A549 (cell line): ENCODE measurements at regions of chr2 and their contacts with region 1.

Region 1: DNA sequence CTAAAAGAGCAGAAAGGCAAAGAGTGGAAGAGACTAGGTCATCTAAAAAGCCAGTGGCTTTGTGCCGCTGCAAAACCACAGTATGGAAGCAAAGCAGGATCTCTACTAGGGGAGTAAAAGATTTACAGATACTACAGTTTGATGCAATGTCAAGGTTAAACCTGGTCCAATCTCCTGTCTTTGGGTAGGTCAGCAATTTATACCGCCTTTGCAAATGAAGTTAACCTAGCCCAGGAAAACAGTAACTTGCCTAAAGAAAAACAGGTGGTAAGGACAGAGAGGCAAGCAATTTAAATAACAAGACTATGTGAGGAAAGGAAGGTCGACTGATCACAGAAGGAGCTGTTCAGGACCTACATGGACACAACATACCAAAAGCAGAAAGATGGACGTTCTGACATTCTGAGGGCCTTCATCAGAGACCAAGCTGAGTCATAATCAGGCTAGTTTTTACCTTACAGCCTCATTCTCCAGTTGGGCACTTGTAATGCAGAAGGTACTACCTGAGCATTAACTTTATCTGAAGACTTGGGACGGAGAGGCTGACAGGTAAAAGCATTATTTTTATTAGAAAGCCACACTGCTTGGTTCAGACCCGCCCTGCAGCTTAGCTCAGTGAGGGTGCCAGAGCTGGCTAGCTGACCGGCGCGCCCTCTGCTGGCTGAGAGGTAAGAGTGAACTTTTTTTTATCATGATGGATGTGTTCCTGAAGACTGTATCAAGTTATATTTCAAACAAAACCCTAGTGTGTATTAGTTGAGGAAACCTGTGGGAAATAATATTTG is 15.9 kb downstream of the CDKL4 start:
- DNase-seq: peak; percentile 76 to 79
- ATAC-seq: peak; percentile 84 to 92
- H3K4me3 ChIP-seq: no peak overlapping the region
- H3K27ac ChIP-seq: peak overlapping the region; percentile 19 to 26; a peak in 2 of 6 replicates
- H3K4me1 ChIP-seq: no peaks in the 10 kb centered on the region
- CTCF ChIP-seq: peak; percentile 97
- EP300 ChIP-seq: no peak
- POLR2A ChIP-seq: no peak
- RAD21 ChIP-seq: peak; percentile 85 to 88

Region 2: DNA sequence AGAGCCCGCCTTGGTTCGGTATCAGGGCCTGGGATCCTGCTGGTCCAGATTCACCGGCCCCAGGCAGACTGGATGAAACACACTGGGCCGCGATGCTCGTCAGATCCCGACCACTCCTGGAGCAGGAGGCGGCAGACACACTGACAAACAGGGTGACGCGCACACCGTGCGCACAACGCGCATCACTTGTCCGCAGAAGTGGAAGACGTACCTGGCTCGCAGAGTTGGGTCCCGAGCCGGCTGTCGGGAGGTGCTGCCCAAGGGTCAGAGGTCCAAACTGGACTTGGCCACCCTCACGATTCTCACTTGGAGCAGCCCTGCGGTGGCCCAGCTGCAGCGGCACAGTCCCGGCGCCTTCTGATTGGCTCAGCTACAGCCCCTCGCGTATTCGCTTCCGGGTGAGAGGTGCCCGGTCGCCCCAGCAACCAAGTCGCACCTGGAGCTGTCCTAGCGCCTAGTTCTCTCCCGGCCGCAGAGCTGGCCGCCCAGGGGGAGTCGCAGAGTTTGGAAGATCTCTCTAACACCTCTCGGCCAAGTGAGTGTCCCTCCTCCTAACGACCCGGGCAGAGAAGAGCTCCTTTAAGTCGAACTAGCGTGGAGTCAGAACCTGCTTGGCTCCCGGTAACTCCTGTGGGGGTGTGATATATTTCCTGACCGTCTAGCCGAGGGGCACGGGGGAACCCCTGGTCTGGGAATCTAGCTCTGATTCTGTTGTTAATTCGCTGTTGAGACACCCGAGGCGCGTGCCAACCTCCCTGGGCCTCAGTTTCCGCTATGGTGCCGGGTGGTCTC is 352.0 kb before region 1 on chr2 and contains the starts of genes DHX57 and MORN2:
- CTCF ChIA-PET with region 1: interaction called, 11 read pairs
- POLR2A ChIA-PET with region 1: no interaction called
- DNase-seq: peak; percentile 88 to 98
- ATAC-seq: peak; percentile 99 to 100
- H3K4me3 ChIP-seq: peak within 1 kb of the TSS; percentile 74
- H3K27ac ChIP-seq: peak within 1 kb of the TSS; percentile 80 to 90
- H3K4me1 ChIP-seq: peaks cover 9% of the 10 kb centered on the region
- CTCF ChIP-seq: no peak
- EP300 ChIP-seq: no peak
- POLR2A ChIP-seq: peak; percentile 79
- RAD21 ChIP-seq: no peak; a peak in 1 of 5 replicates
- polyA plus RNA-seq, gene DHX57: 31.8 and 36.8 TPM in 2 replicates
- polyA plus RNA-seq, gene MORN2: 32.5 and 54.7 TPM in 2 replicates

Region 3: DNA sequence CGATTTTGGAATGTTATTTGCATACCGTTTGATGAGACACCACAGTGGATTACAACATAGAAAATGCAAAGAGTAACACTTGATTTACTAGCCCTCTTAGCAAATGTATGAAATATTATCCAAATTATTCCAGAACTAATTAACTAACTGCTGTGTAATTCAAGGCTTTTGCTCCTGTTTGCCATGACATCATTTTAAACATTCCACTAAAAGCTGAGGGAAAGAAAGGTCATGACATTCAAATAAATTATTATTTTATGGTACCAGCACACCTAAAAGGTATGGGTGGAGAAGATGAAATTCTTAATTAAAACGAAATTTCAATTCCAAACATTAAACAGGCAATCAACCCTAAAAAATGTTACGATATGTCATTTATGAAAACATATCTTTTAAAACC is 199.0 kb before region 1 on chr2:
- CTCF ChIA-PET with region 1: interaction called, 15 read pairs
- POLR2A ChIA-PET with region 1: no interaction called
- DNase-seq: no peak
- ATAC-seq: no peak
- H3K4me3 ChIP-seq: no peak overlapping the region
- H3K27ac ChIP-seq: no peak overlapping the region
- H3K4me1 ChIP-seq: peaks cover 8% of the 10 kb centered on the region; the same call in 2 of the 3 replicates
- CTCF ChIP-seq: no peak
- EP300 ChIP-seq: no peak
- POLR2A ChIP-seq: no peak
- RAD21 ChIP-seq: no peak

Region 4: GRCh38 chr2:39065616-39066015 is 162.2 kb before region 1 on chr2:
- CTCF ChIA-PET with region 1: interaction called, 139 read pairs
- POLR2A ChIA-PET with region 1: no interaction called
- DNase-seq: no peak
- ATAC-seq: no peak
- H3K4me3 ChIP-seq: no peak overlapping the region
- H3K27ac ChIP-seq: no peak overlapping the region
- H3K4me1 ChIP-seq: 0 out of 3 replicates have a peak, but pooled peaks cover 7% of the 10 kb centered on the region
- CTCF ChIP-seq: no peak
- EP300 ChIP-seq: no peak
- POLR2A ChIP-seq: no peak
- RAD21 ChIP-seq: no peak

Region 5: GRCh38 chr2:39124000-39124745 is 103.6 kb before region 1 on chr2:
- CTCF ChIA-PET with region 1: interaction called, 53 read pairs
- POLR2A ChIA-PET with region 1: interaction called, 6 read pairs
- DNase-seq: peak; percentile 89 to 99
- ATAC-seq: peak; percentile 73 to 88
- H3K4me3 ChIP-seq: peak overlapping the region; percentile 61
- H3K27ac ChIP-seq: peak overlapping the region; percentile 84 to 89
- H3K4me1 ChIP-seq: peaks cover 14% of the 10 kb centered on the region; the same call in 2 of the 3 replicates
- CTCF ChIP-seq: peak; percentile 65
- EP300 ChIP-seq: no peak
- POLR2A ChIP-seq: peak; percentile 77
- RAD21 ChIP-seq: peak in 1 of 2 experiments; percentile 68; a peak in 3 of 5 replicates

Region 6: DNA sequence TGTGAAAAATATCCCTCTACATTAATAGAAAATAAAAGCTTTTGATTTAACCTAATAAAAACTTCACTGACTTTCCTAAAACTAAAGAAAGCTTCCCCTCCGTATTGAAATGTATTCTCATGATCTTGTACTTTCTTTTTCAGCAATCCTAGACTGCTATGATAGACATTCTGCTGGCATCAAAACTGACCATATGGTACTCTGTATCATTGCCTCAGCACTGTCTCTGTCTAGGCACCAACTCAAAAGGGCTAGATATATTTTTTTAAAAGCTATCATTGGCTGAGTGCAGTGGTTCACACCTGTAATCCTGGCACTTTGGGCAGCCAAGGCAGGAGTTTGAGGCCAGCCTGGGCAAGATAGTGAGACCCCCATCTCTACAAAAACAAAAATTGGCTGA is 17.0 kb before region 1 on chr2:
- CTCF ChIA-PET with region 1: interaction called, 33 read pairs
- POLR2A ChIA-PET with region 1: no interaction called
- DNase-seq: no peak
- ATAC-seq: no peak
- H3K4me3 ChIP-seq: no peak overlapping the region
- H3K27ac ChIP-seq: no peak overlapping the region
- H3K4me1 ChIP-seq: no peaks in the 10 kb centered on the region
- CTCF ChIP-seq: no peak
- EP300 ChIP-seq: no peak
- POLR2A ChIP-seq: no peak
- RAD21 ChIP-seq: no peak

Region 7: GRCh38 chr2:40480073-40480472 is 1252.3 kb after region 1 on chr2:
- CTCF ChIA-PET with region 1: no interaction called
- POLR2A ChIA-PET with region 1: no interaction called
- DNase-seq: no peak
- ATAC-seq: no peak
- H3K4me3 ChIP-seq: no peak overlapping the region
- H3K27ac ChIP-seq: no peak overlapping the region
- H3K4me1 ChIP-seq: no peaks in the 10 kb centered on the region
- CTCF ChIP-seq: no peak
- EP300 ChIP-seq: no peak
- POLR2A ChIP-seq: no peak
- RAD21 ChIP-seq: no peak